HepG2 (cell line): ENCODE measurements at regions of chr14 and their contacts with region 1.

Region 1: GRCh38 chr14:64303471-64303917 is 9.3 kb upstream of the ESR2 start:
- DNase-seq: peak; percentile 63
- ATAC-seq: peak; percentile 85
- H3K4me3 ChIP-seq: no peak overlapping the region
- H3K27ac ChIP-seq: no peak overlapping the region
- H3K4me1 ChIP-seq: peaks cover 11% of the 10 kb centered on the region
- H3K27me3 ChIP-seq: 0 out of 5 replicates have a peak, but pooled peaks cover 0 to 3% of the 10 kb centered on the region in 2 experiments
- CTCF ChIP-seq: peak; percentile 70
- EP300 ChIP-seq: no peak
- POLR2A ChIP-seq: no peak
- RAD21 ChIP-seq: no peak; the same call in 1 of the 2 replicates

Region 2: DNA sequence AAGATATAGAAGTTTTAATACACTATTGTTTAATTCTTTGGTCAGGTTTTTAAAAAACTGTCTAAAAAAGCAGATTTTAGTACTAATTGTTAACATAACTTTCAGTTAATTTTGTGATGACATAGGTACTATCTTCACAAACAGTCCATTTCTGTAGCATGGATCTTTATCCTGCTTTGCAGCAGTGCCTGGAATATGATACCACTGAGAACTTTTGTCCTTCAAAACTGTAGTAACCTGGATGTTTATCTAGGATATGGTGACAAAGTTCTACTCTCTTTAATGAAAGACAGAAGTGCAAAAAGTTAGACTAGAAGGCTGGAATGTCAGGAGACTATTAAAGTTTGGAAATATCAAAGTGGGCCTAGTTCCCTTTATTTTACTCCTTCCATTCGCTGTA is 290.8 kb before region 1 on chr14:
- CTCF ChIA-PET with region 1: interaction called, 6 read pairs
- POLR2A ChIA-PET with region 1: no interaction called
- in situ Hi-C with region 1: loop called (anchors 25 kb)
- intact Hi-C with region 1: loop called (anchors 2 kb)
- DNase-seq: peak; percentile 51
- ATAC-seq: peak; percentile 84
- H3K4me3 ChIP-seq: no peak overlapping the region
- H3K27ac ChIP-seq: peak overlapping the region; percentile 20
- H3K4me1 ChIP-seq: peaks cover 22% of the 10 kb centered on the region
- H3K27me3 ChIP-seq: no peaks in the 10 kb centered on the region
- CTCF ChIP-seq: no peak
- EP300 ChIP-seq: no peak
- POLR2A ChIP-seq: no peak
- RAD21 ChIP-seq: no peak

Region 3: DNA sequence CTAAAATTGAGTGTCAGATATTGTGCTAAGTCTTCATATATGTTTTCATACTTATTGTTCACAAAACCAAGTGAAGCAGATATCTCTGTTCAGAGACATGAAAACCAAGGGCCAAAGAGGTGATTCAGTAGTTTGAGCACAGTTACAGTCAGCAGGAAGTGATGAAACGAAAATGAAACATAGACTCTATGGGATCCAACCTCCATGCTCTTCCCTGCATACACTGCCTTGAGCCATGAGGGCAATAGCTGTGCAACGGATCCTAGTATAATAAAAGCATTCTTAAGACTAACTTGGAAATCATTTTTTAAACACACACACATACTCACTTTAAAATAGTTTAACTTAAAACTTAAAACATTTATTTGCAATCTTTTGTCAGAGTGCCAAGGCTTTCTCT is 37.3 kb before region 1 on chr14:
- CTCF ChIA-PET with region 1: no interaction called
- POLR2A ChIA-PET with region 1: no interaction called
- in situ Hi-C with region 1: no loop called
- intact Hi-C with region 1: no loop called
- DNase-seq: no peak
- ATAC-seq: peak; percentile 52; the same call in 2 of the 3 replicates
- H3K4me3 ChIP-seq: no peak overlapping the region
- H3K27ac ChIP-seq: no peak overlapping the region
- H3K4me1 ChIP-seq: no peaks in the 10 kb centered on the region
- H3K27me3 ChIP-seq: no peaks in the 10 kb centered on the region
- CTCF ChIP-seq: no peak
- EP300 ChIP-seq: no peak
- POLR2A ChIP-seq: no peak
- RAD21 ChIP-seq: no peak

Region 4: GRCh38 chr14:65206448-65207096 is 903.1 kb after region 1 on chr14:
- CTCF ChIA-PET with region 1: no interaction called
- POLR2A ChIA-PET with region 1: no interaction called
- in situ Hi-C with region 1: no loop called
- intact Hi-C with region 1: no loop called
- DNase-seq: no peak
- ATAC-seq: no peak
- H3K4me3 ChIP-seq: no peak overlapping the region
- H3K27ac ChIP-seq: no peak overlapping the region
- H3K4me1 ChIP-seq: peaks cover 45% of the 10 kb centered on the region
- H3K27me3 ChIP-seq: no peaks in the 10 kb centered on the region; a peak in 1 of 5 replicates
- CTCF ChIP-seq: no peak
- EP300 ChIP-seq: no peak
- POLR2A ChIP-seq: no peak
- RAD21 ChIP-seq: no peak